ENCODE measurements at regions of chr6 and their contacts with region 1.

Region 1: DNA sequence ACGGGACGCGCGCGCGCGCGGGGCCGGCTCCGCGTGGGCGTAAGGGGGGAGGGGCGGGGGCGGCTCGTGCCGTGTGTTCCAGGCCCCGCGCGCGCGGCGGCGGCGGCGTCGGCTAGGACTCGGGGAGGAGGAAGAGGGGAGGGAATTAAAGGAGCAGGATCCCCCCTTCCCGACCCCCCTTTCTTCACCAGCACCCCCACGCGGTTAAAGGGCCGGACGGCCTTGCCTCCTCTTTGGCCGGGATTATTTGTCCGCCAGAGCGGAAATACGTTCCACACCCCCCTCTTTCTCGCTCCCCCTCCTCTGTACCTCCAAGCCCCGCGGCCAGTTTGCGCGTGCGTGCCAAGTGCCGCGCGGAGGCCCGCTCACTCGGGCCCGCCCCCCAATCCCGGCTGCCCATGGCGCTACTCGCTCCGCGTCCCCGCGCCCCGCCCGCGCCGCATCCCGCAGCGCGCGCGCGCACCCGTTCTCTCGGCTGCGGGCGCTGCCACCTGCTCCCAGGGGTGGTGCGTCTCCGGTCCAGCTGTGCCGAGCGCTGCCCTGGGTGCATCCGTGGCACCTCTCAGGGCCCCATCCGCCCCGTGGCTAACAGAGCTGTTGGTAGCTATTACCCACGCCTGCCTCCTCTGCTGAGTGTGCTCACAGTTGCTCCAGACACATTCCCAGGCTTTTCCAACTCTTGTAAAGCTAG is at the start of gene ZBTB12:
- DNase-seq: peak; percentile 74
- H3K4me3 ChIP-seq: peak within 1 kb of the TSS; percentile 61
- H3K27me3 ChIP-seq: no peaks in the 10 kb centered on the region
- CTCF ChIP-seq: no peak
- polyA plus RNA-seq, gene ZBTB12: 2.0 and 2.6 TPM in 2 replicates

Region 2: GRCh38 chr6:31660381-31661261 is 241.5 kb before region 1 on chr6 and contains the start of gene C6orf47:
- CTCF ChIA-PET with region 1: no interaction called
- POLR2A ChIA-PET with region 1: interaction called, 10 read pairs
- DNase-seq: no peak
- H3K4me3 ChIP-seq: peak within 1 kb of the TSS; percentile 59
- H3K27me3 ChIP-seq: no peaks in the 10 kb centered on the region
- CTCF ChIP-seq: no peak
- polyA plus RNA-seq, gene C6orf47: 9.9 and 13.0 TPM in 2 replicates

Region 3: DNA sequence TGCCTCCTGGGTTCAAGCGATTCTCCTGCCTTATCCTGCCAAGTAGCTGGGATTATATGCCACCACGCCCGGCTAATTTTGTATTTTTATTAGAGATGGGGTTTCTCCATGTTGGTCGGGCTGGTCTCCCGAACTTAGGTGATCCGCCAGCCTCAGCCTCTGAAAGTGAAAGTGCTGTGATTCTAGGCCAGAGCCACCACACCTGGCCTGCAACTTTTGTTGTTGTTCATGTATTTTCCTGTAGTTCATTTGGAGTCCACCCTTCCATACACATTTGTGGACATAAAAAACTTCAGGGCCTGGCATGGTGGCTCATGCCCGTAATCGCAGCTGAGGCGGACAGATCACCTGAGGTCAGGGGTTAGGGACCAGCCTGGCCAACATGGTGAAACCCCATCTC is 60.0 kb before region 1 on chr6:
- CTCF ChIA-PET with region 1: no interaction called
- POLR2A ChIA-PET with region 1: interaction called, 19 read pairs
- DNase-seq: no peak
- H3K4me3 ChIP-seq: no peak overlapping the region
- H3K27me3 ChIP-seq: no peaks in the 10 kb centered on the region
- CTCF ChIP-seq: no peak

Region 4: DNA sequence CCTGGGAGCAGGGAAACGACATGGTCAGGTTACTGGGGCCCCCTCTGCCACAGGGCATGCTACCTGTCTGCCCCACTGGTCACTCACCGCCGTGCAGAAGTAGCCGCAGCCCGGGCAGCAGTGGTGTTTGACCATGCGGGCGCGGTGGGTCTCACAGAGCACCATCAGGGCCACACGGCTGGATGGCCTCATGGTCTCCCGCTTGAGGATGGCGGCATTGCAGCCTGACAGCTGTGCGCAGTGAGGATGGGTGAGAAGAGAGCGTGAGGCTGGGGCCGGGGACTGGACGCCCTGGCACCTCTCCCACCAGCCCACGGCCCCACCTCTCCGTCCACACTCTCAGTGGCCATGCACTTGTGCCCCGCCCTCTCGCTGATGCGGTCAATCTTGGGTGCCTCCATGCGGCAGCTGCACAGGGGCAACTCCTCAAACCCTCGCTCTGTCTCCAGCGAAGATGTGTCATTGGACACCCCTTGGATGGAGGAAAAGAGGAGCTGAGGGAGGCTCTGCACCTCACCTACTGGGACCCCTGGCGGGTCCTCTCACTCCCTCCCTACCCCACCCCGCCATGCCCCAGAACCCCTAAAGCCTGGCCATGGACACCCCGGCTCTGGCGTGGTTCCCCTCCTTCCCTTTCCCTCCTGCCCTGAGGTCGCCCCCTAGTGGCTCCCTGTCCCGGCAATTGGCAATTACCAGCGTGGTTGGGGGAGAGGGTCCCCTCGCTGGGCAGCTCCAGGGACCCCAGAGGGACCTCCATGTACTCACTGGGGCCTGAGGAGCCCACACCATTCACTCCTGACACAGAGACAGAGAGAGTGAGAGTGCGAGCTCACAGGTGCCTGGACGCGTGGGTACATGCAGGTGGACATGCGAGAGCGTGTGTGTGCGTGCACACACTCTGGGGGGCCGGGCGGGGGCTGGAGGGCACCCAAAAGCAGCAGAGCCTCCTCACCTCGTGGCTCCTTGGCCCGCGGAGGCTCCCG is 13.5 kb before region 1 on chr6:
- CTCF ChIA-PET with region 1: interaction called, 11 read pairs
- POLR2A ChIA-PET with region 1: no interaction called
- DNase-seq: no peak
- H3K4me3 ChIP-seq: no peak overlapping the region
- H3K27me3 ChIP-seq: no peaks in the 10 kb centered on the region
- CTCF ChIP-seq: peak; percentile 82